ENCODE measurements at regions of chr4 and their contacts with region 1.

Region 1: DNA sequence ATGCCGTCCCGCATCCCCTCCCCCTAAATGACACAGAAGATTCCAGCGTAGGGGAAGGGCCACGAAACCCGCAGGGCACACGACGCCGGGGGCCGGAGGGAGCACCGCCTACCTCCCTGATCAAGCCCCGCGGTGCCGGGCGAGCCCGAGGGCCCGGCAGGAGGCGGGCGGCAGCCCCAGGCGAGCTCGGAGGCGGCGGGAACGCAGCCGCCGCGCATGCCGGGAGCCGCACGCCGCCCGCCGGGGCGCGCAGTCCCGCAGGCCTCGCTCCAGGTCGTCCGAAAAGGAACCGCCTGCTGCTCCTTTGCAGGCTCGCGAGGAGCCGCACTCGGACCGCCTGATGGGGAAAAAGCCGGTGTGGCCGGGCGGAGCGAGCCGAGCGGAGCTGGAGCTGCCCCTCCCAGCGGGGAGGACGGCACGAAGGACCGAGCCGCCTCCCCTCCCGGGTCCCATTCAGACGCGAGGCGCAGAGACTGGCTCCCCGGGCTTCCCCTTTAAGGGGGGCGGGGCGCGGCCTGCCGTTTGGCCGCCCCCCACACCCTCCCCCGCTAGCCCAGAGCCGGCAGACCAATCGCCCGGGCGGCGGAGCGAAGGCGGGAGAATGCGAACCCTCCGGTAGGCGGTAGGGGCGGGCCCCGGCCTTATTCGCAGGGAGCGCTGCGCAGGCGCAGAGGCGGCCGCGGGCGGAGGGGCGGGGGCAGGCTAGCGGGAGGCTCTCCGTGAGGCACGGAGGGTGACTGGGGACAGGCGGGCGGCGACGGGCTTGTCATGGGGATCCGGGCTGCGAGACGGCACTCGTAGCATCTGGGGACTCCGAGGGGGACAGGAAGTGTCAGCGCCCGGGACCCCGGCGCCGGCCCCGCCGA is 561 bp upstream of the ING2 start:
- DNase-seq: peak; percentile 96 to 97 (median 96)
- H3K4me3 ChIP-seq: peak overlapping the region; percentile 90 to 96 (median 93)
- H3K4me3 Mint-ChIP-seq: peak overlapping the region; percentile 88 to 92
- H3K27ac ChIP-seq: peak overlapping the region; percentile 79 to 96
- H3K27ac Mint-ChIP-seq: peak overlapping the region; percentile 79 to 97 (median 91)
- H3K4me1 ChIP-seq: peaks cover 10 to 23% of the 10 kb centered on the region in 2 donors
- H3K4me1 Mint-ChIP-seq: peaks cover 21% of the 10 kb centered on the region
- H3K27me3 ChIP-seq: no peaks in the 10 kb centered on the region
- H3K27me3 Mint-ChIP-seq: peaks cover 0 to 3% (median 0%) of the 10 kb centered on the region in 3 donors
- CTCF ChIP-seq: peak; percentile 12

Region 2: DNA sequence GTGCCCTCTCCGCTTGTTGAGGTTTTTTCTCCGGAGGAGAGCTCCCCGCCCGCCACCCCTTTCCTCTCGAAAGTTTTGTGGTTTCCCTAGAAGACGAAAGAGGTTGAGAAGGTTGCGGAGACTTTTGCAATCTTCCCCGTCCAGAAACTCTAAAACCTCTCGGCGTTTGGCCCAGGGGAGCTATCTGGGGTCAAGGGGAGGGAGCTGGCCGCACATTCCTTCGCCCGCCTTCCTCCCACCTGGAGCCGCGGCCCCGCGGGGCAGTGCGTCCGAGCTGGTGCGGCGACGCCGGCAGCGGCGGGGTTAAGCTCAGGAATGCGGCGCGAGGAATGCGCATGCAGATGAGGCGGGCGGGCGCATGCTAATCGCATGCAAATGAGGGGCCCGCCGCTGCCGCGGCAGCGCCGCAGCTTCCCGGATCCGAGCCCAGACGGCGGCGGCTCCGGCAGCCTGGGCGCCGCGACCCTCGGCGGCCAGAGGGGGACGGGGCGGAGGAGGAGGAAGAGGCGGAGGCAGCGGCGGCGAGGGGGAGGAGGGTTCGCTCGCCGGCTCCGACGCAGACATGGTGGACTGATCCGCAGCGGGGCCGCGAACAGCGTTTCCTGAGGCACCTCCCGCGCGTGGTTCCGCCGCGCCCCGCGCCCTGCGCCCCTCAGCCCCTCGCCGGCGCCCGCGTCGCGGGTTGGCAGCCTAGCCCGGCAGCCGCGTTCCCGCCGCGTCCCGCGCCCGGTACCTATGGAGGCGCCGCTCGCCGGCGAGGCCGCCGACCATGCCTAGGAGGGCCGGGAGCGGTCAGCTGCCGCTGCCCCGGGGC is 405.4 kb before region 1 on chr4 and contains the start of gene WWC2:
- intact Hi-C with region 1: loop called in 1 of 2 experiments (anchors 10 kb)
- DNase-seq: peak; percentile 65 to 76 (median 72)
- H3K4me3 ChIP-seq: peak within 1 kb of the TSS; percentile 77 to 84 (median 80)
- H3K4me3 Mint-ChIP-seq: peak within 1 kb of the TSS; percentile 82 to 95
- H3K27ac ChIP-seq: peak within 1 kb of the TSS; percentile 57 to 62
- H3K27ac Mint-ChIP-seq: peak within 1 kb of the TSS in 5 of 7 donors; percentile 3 to 58 (median 46)
- H3K4me1 ChIP-seq: peaks cover 16 to 31% of the 10 kb centered on the region in 2 donors
- H3K4me1 Mint-ChIP-seq: peaks cover 18% of the 10 kb centered on the region
- H3K27me3 ChIP-seq: peaks cover 41 to 67% of the 10 kb centered on the region in 2 donors
- H3K27me3 Mint-ChIP-seq: peaks cover 42 to 70% (median 60%) of the 10 kb centered on the region in 3 donors
- CTCF ChIP-seq: no peak
- polyA plus RNA-seq, gene WWC2: 1.9 to 3.8 (median 2.9) TPM

Region 3: GRCh38 chr4:183182873-183183725 is 321.2 kb before region 1 on chr4:
- intact Hi-C with region 1: no loop called
- DNase-seq: peak; percentile 53 to 72 (median 57)
- H3K4me3 ChIP-seq: no peak overlapping the region
- H3K4me3 Mint-ChIP-seq: peak overlapping the region in 1 of 2 donors; percentile 62
- H3K27ac ChIP-seq: no peak overlapping the region
- H3K27ac Mint-ChIP-seq: peak overlapping the region in 3 of 7 donors; percentile 23 to 44 (median 27)
- H3K4me1 ChIP-seq: peaks cover 8 to 10% of the 10 kb centered on the region in 2 donors
- H3K4me1 Mint-ChIP-seq: peaks cover 10% of the 10 kb centered on the region
- H3K27me3 ChIP-seq: no peaks in the 10 kb centered on the region
- H3K27me3 Mint-ChIP-seq: peaks cover 0 to 4% (median 1%) of the 10 kb centered on the region in 3 donors
- CTCF ChIP-seq: no peak

Region 4: DNA sequence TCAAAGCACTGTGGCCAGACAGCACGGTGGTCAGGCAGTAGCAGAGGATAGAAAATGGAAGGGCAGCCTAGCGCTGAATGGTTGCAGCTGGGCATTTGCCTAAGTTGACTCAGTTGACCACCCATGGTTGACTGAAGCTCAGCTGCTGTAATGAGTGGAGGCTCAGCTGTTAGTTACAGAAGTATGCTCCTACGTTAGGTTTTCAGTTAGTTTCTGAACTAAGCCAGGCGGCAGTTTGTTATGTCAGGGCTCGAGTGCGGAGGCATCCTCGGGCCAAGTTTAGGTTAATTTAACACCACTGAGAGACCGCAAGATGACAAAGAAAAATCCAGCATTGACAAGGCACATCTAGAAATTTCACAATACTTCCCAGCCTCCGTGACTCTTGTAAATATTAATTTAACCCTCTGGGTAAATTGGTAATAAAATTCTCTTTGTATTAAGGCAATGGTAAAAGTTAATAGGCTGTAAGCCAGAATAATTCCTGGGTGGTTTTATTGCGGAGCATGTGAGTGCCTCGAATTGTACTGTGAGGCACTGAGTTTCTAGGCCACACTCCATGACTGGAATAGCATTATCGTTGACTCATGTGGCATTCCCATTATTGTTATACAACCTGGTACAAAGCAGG is 93.0 kb before region 1 on chr4:
- intact Hi-C with region 1: no loop called
- DNase-seq: no peak
- H3K4me3 ChIP-seq: no peak overlapping the region
- H3K4me3 Mint-ChIP-seq: no peak overlapping the region
- H3K27ac ChIP-seq: no peak overlapping the region
- H3K27ac Mint-ChIP-seq: no peak overlapping the region
- H3K4me1 ChIP-seq: peaks cover 0 to 8% of the 10 kb centered on the region in 2 donors
- H3K4me1 Mint-ChIP-seq: peaks cover 12% of the 10 kb centered on the region
- H3K27me3 ChIP-seq: no peaks in the 10 kb centered on the region
- H3K27me3 Mint-ChIP-seq: peaks cover 3 to 6% (median 4%) of the 10 kb centered on the region in 3 donors
- CTCF ChIP-seq: no peak

Region 5: DNA sequence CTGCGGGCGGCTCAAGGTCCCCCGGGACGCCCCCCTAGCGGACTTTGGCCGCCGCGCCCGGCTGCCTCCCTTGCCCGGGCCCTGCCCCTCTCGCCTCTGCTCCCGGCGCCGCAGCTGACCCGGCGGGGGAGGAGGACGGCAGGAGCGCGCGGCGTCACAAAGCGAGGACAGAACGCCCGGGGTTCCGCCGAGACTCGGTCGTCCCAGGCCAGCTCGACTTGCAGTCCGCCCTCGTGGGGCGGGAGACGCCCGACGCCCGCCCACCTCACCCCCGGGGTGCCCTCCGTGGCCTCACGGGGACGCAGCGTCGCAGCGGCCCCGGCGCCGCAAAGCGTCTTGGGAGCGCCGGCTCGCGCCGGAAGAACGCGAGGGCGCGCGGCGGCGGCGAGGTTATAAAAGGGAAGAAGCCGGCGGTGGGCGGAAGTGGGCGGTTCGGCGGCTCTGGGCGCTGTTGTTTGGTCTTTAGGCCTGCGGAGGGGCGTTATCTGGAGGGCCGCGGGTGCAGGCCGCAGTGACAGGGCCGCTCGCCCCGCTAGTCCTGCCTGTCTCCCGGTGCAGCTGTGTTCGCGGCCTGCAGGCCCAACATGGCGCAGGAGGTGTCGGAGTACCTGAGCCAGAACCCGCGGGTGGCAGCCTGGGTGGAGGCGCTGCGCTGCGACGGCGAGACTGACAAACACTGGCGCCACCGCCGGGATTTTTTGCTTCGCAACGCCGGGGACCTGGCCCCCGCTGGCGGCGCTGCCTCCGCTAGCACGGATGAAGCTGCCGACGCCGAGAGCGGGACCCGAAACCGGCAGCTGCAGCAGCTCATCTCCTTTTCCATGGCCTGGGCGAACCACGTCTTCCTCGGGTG is 59.9 kb before region 1 on chr4 and contains the start of gene CDKN2AIP:
- intact Hi-C with region 1: loop called (anchors 2 to 5 kb)
- DNase-seq: peak; percentile 86 to 91 (median 89)
- H3K4me3 ChIP-seq: peak within 1 kb of the TSS; percentile 50 to 99 (median 92)
- H3K4me3 Mint-ChIP-seq: peak within 1 kb of the TSS; percentile 95 to 96
- H3K27ac ChIP-seq: peak within 1 kb of the TSS; percentile 92 to 96
- H3K27ac Mint-ChIP-seq: peak within 1 kb of the TSS; percentile 87 to 97 (median 95)
- H3K4me1 ChIP-seq: peaks cover 35 to 39% of the 10 kb centered on the region in 2 donors
- H3K4me1 Mint-ChIP-seq: peaks cover 35% of the 10 kb centered on the region
- H3K27me3 ChIP-seq: no peaks in the 10 kb centered on the region
- H3K27me3 Mint-ChIP-seq: peaks cover 0 to 8% (median 0%) of the 10 kb centered on the region in 3 donors
- CTCF ChIP-seq: peak; percentile 10
- polyA plus RNA-seq, gene CDKN2AIP: 3.1 to 4.4 (median 3.7) TPM

Region 6: GRCh38 chr4:183471946-183472708 is 32.2 kb before region 1 on chr4:
- intact Hi-C with region 1: no loop called
- DNase-seq: peak; percentile 46 to 75 (median 70)
- H3K4me3 ChIP-seq: peak overlapping the region; percentile 10 to 63 (median 18)
- H3K4me3 Mint-ChIP-seq: peak overlapping the region; percentile 31 to 48
- H3K27ac ChIP-seq: peak overlapping the region in 1 of 2 donors; percentile 20
- H3K27ac Mint-ChIP-seq: peak overlapping the region in 4 of 7 donors; percentile 2 to 80 (median 60)
- H3K4me1 ChIP-seq: peaks cover 15 to 17% of the 10 kb centered on the region in 2 donors
- H3K4me1 Mint-ChIP-seq: peaks cover 22% of the 10 kb centered on the region
- H3K27me3 ChIP-seq: no peaks in the 10 kb centered on the region
- H3K27me3 Mint-ChIP-seq: peaks cover 0 to 5% (median 1%) of the 10 kb centered on the region in 3 donors
- CTCF ChIP-seq: peak; percentile 94

Region 7: GRCh38 chr4:183544109-183544508 is 39.8 kb after region 1 on chr4:
- intact Hi-C with region 1: no loop called
- DNase-seq: peak in 1 of 3 donors; percentile 11
- H3K4me3 ChIP-seq: no peak overlapping the region
- H3K4me3 Mint-ChIP-seq: no peak overlapping the region
- H3K27ac ChIP-seq: no peak overlapping the region
- H3K27ac Mint-ChIP-seq: no peak overlapping the region
- H3K4me1 ChIP-seq: no peaks in the 10 kb centered on the region
- H3K4me1 Mint-ChIP-seq: no peaks in the 10 kb centered on the region
- H3K27me3 ChIP-seq: no peaks in the 10 kb centered on the region
- H3K27me3 Mint-ChIP-seq: peaks cover 0 to 13% (median 2%) of the 10 kb centered on the region in 3 donors
- CTCF ChIP-seq: no peak

Region 8: GRCh38 chr4:184474263-184475095 is 970.2 kb after region 1 on chr4 and contains the start of gene IRF2:
- intact Hi-C with region 1: loop called in 1 of 2 experiments (anchors 10 kb)
- DNase-seq: peak; percentile 96 to 99 (median 99)
- H3K4me3 ChIP-seq: peak within 1 kb of the TSS; percentile 86 to 100 (median 97)
- H3K4me3 Mint-ChIP-seq: peak within 1 kb of the TSS; percentile 99
- H3K27ac ChIP-seq: peak within 1 kb of the TSS; percentile 99
- H3K27ac Mint-ChIP-seq: peak within 1 kb of the TSS; percentile 96 to 99 (median 99)
- H3K4me1 ChIP-seq: peaks cover 53 to 65% of the 10 kb centered on the region in 2 donors
- H3K4me1 Mint-ChIP-seq: peaks cover 60% of the 10 kb centered on the region
- H3K27me3 ChIP-seq: no peaks in the 10 kb centered on the region
- H3K27me3 Mint-ChIP-seq: no peaks in the 10 kb centered on the region
- CTCF ChIP-seq: no peak
- polyA plus RNA-seq, gene IRF2: 51.3 to 76.8 (median 56.1) TPM

Region 9: GRCh38 chr4:185203486-185204237 is 1699.4 kb after region 1 on chr4 and contains the start of gene CFAP97:
- intact Hi-C with region 1: loop called in 1 of 2 experiments (anchors 10 kb)
- DNase-seq: peak; percentile 63 to 71 (median 69)
- H3K4me3 ChIP-seq: peak within 1 kb of the TSS; percentile 47 to 78 (median 47)
- H3K4me3 Mint-ChIP-seq: peak within 1 kb of the TSS; percentile 85 to 88
- H3K27ac ChIP-seq: peak within 1 kb of the TSS in 1 of 2 donors; percentile 36
- H3K27ac Mint-ChIP-seq: peak within 1 kb of the TSS; percentile 37 to 83 (median 68)
- H3K4me1 ChIP-seq: peaks cover 13 to 32% of the 10 kb centered on the region in 2 donors
- H3K4me1 Mint-ChIP-seq: peaks cover 34% of the 10 kb centered on the region
- H3K27me3 ChIP-seq: peaks cover 12 to 19% of the 10 kb centered on the region in 2 donors
- H3K27me3 Mint-ChIP-seq: peaks cover 25 to 41% (median 37%) of the 10 kb centered on the region in 3 donors
- CTCF ChIP-seq: no peak
- polyA plus RNA-seq, gene CFAP97: 2.7 to 16.8 (median 12.3) TPM